ENCODE measurements at regions of chrX and their contacts with region 1.

Region 1: GRCh38 chrX:31266172-31267076 is 194.6 kb upstream of the FTHL17 start:
- DNase-seq: peak; percentile 68
- H3K4me3 ChIP-seq: peak overlapping the region; percentile 96
- H3K27ac ChIP-seq: peak overlapping the region; percentile 35
- H3K4me1 ChIP-seq: peaks cover 19% of the 10 kb centered on the region
- CTCF ChIP-seq: no peak

Region 2: DNA sequence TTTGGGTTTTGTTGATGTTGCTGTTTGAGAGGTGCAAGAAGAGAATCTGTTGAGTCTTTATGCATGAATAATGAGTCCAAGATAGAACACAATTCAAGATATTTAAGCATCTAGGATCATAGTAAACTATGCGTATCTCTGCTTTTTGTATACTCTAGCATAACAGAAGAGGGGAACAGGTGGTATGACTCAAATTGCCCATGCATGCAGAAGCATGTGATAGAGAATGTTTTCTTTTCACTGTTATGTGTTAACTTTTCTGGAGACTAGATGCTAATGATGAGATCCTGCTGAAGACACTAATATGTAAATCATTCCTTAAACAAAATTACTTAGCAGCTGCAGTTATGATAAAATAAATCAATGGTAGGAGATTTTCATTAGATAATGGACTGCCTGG is 29.2 kb before region 1 on chrX:
- CTCF ChIA-PET with region 1: no interaction called
- POLR2A ChIA-PET with region 1: interaction called, 4 read pairs
- intact Hi-C with region 1: loop called (anchors 2 kb)
- DNase-seq: peak; percentile 41
- H3K4me3 ChIP-seq: peak overlapping the region; percentile 43
- H3K27ac ChIP-seq: peak overlapping the region; percentile 90
- H3K4me1 ChIP-seq: peaks cover 99% of the 10 kb centered on the region
- CTCF ChIP-seq: no peak

Region 3: GRCh38 chrX:31323658-31324057 is 57.2 kb after region 1 on chrX:
- CTCF ChIA-PET with region 1: no interaction called
- POLR2A ChIA-PET with region 1: no interaction called
- intact Hi-C with region 1: loop called (anchors 1 kb)
- DNase-seq: no peak
- H3K4me3 ChIP-seq: no peak overlapping the region
- H3K27ac ChIP-seq: peak overlapping the region; percentile 5
- H3K4me1 ChIP-seq: no peaks in the 10 kb centered on the region
- CTCF ChIP-seq: no peak

Region 4: GRCh38 chrX:31334997-31335396 is 68.6 kb after region 1 on chrX:
- CTCF ChIA-PET with region 1: no interaction called
- POLR2A ChIA-PET with region 1: no interaction called
- intact Hi-C with region 1: no loop called
- DNase-seq: no peak
- H3K4me3 ChIP-seq: no peak overlapping the region
- H3K27ac ChIP-seq: no peak overlapping the region
- H3K4me1 ChIP-seq: no peaks in the 10 kb centered on the region
- CTCF ChIP-seq: no peak

Measured in OCI-LY7 (cell line).